IMR-90 (cell line): ENCODE measurements at regions of chr1 and their contacts with region 1.

Region 1: GRCh38 chr1:240210026-240210425 is 118.3 kb downstream of the FMN2 start:
- DNase-seq: peak; percentile 71
- ATAC-seq: no peak
- H3K4me3 ChIP-seq: no peak overlapping the region
- H3K27ac ChIP-seq: no peak overlapping the region
- H3K4me1 ChIP-seq: peaks cover 16% of the 10 kb centered on the region
- H3K27me3 ChIP-seq: no peaks in the 10 kb centered on the region
- CTCF ChIP-seq: no peak
- POLR2A ChIP-seq: no peak
- RAD21 ChIP-seq: no peak

Region 2: DNA sequence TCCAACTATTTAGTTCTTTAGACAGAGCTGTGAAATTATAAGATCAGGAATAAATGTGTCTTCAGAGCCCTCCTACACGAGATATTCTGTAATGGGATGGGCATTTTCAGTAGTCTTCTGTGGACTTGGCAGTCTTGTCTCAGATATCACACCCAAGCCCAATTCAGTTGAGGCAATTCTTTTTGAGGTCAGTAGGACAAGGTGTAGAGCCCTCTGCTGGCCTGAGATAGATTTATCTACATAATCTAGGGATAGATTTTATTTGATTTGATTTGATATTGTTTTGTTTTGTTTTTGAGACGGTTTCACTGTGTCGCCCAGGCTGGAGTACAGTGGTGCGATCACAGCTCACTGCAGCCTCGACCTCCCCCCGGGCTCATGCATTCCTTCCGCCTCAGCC is 40.8 kb before region 1 on chr1:
- CTCF ChIA-PET with region 1: no interaction called
- POLR2A ChIA-PET with region 1: interaction called, 10 read pairs
- dilution Hi-C with region 1: no loop called
- in situ Hi-C with region 1: no loop called
- intact Hi-C with region 1: no loop called
- DNase-seq: peak; percentile 31
- ATAC-seq: peak; percentile 34; the same call in 1 of the 2 replicates
- H3K4me3 ChIP-seq: no peak overlapping the region
- H3K27ac ChIP-seq: no peak overlapping the region
- H3K4me1 ChIP-seq: no peaks in the 10 kb centered on the region
- H3K27me3 ChIP-seq: no peaks in the 10 kb centered on the region
- CTCF ChIP-seq: peak; percentile 40
- POLR2A ChIP-seq: no peak
- RAD21 ChIP-seq: 0 out of 2 replicates have a peak, but pooled peaks have one; percentile 16

Region 3: GRCh38 chr1:240282061-240282830 is 72.2 kb after region 1 on chr1:
- CTCF ChIA-PET with region 1: no interaction called
- POLR2A ChIA-PET with region 1: no interaction called
- dilution Hi-C with region 1: no loop called
- in situ Hi-C with region 1: no loop called
- intact Hi-C with region 1: loop called (anchors 5 kb)
- DNase-seq: peak; percentile 45
- ATAC-seq: no peak
- H3K4me3 ChIP-seq: no peak overlapping the region
- H3K27ac ChIP-seq: no peak overlapping the region
- H3K4me1 ChIP-seq: peaks cover 6% of the 10 kb centered on the region
- H3K27me3 ChIP-seq: no peaks in the 10 kb centered on the region
- CTCF ChIP-seq: no peak
- POLR2A ChIP-seq: no peak
- RAD21 ChIP-seq: no peak

Region 4: DNA sequence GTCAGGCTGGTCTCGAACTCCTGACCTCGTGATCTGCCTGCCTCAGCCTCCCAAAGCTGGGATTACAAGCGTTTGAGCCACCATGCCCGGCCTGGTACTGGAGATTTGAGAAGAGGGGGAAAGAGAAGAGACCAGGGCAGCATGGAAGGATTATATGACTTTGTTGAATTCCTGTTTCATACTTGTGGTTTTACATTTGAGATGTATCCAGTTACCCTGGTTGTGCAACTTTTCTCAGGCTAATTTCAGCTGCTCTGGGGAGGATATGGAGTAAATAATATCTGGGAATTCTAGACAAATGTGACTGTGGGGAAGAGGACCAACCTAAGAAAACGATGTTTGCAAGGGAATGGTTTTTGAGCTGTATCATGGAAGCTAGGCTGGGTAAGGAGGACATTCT is 491.4 kb after region 1 on chr1:
- CTCF ChIA-PET with region 1: no interaction called
- POLR2A ChIA-PET with region 1: no interaction called
- dilution Hi-C with region 1: loop called (anchors 25 kb)
- in situ Hi-C with region 1: no loop called
- intact Hi-C with region 1: no loop called
- DNase-seq: peak; percentile 92
- ATAC-seq: peak; percentile 92
- H3K4me3 ChIP-seq: no peak overlapping the region
- H3K27ac ChIP-seq: peak overlapping the region; percentile 59; the same call in 1 of the 2 replicates
- H3K4me1 ChIP-seq: peaks cover 2% of the 10 kb centered on the region
- H3K27me3 ChIP-seq: no peaks in the 10 kb centered on the region
- CTCF ChIP-seq: no peak
- POLR2A ChIP-seq: no peak
- RAD21 ChIP-seq: no peak